ENCODE measurements at regions of chr10 and their contacts with region 1.

Region 1: DNA sequence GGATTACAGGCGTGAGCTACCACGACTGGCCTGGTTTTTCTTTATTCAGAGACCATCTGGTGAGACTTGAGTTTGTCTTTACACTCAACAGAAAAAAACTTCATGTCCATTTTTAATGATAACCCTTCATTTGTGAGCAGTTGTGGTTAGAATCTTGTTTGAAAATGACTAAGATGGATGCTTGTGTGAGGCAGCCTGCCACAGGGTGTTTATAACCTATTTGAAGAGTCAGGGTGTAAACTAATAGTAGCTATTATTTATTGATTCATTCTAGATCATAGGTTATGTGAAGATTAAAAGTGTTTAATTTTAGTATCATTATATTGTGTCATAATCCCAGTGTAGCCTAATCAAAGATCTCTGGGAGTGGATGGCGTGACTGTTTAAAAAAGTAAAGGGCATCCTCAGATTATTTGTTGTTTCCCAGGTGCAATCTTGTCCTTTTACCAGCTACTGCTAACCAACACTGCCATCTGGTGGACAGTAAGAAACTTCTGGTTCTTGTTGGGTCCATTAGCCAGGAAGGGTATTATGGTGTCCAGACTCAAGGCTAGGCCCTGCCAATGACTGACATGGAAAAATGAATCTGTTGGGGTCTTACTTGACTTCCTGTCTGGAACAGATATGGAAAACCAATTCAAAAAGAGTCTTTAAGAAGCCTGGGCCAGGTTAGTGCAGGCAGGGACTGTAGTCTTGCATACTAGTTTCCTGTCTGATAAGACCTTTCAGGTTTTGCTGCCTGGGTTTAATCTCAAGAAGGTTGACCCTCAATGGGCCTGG is 24.9 kb downstream of the NRBF2 start:
- DNase-seq: peak; percentile 61
- ATAC-seq: peak; percentile 61
- H3K4me3 Mint-ChIP-seq: no peak overlapping the region
- H3K27ac Mint-ChIP-seq: no peak overlapping the region
- H3K4me1 Mint-ChIP-seq: peaks cover 6% of the 10 kb centered on the region
- H3K27me3 Mint-ChIP-seq: no peaks in the 10 kb centered on the region

Region 2: DNA sequence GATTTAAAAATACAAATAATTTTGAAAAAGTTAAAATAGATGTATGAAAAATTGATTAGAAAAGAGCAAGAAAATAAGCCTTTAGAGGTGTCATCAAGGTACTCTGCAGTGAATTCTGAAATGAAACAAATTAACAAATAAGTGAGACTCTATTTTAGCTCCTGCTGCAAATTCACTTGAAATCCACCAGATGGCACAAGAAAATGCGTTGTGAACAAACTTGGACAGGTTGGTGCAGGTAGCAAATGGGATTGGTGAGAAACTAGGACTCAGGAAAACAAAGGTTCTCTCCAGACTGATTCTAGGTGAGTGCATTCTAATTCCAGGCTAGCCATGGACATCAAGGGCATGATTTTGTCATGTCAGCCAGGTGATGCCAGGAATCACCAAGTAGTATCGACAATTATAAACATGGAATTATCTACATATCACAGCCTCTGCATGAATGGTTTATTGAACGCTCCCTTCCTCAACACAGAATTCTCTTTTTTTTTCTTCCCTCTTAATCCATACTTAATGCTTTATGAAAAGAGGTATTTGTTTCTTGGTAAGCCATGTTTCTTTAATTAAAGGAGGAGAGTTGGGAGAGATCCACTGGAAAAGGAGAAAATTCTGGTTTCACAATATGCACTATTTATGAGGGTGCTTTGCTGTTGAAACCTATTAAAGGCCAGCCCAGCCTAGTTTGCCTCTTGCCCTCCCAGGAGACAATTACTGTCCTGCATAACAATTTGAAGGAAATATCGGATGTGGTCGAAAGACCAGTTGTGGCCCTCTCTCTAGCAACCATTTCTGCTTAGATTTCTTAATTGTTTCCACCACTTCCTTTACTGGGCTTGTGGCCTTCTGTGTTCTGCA is 665.8 kb before region 1 on chr10:
- CTCF ChIA-PET with region 1: interaction called, 6 read pairs
- POLR2A ChIA-PET with region 1: no interaction called
- intact Hi-C with region 1: loop called (anchors 5 to 10 kb)
- DNase-seq: no peak
- ATAC-seq: no peak
- H3K4me3 Mint-ChIP-seq: no peak overlapping the region
- H3K27ac Mint-ChIP-seq: no peak overlapping the region
- H3K4me1 Mint-ChIP-seq: no peaks in the 10 kb centered on the region
- H3K27me3 Mint-ChIP-seq: peaks cover 3% of the 10 kb centered on the region

Region 3: GRCh38 chr10:62594093-62594520 is 563.9 kb before region 1 on chr10:
- CTCF ChIA-PET with region 1: interaction called, 12 read pairs
- POLR2A ChIA-PET with region 1: interaction called, 3 read pairs
- intact Hi-C with region 1: loop called (anchors 1 kb)
- DNase-seq: peak; percentile 71
- ATAC-seq: peak; percentile 84
- H3K4me3 Mint-ChIP-seq: no peak overlapping the region
- H3K27ac Mint-ChIP-seq: no peak overlapping the region
- H3K4me1 Mint-ChIP-seq: peaks cover 4% of the 10 kb centered on the region
- H3K27me3 Mint-ChIP-seq: peaks cover 14% of the 10 kb centered on the region

Region 4: DNA sequence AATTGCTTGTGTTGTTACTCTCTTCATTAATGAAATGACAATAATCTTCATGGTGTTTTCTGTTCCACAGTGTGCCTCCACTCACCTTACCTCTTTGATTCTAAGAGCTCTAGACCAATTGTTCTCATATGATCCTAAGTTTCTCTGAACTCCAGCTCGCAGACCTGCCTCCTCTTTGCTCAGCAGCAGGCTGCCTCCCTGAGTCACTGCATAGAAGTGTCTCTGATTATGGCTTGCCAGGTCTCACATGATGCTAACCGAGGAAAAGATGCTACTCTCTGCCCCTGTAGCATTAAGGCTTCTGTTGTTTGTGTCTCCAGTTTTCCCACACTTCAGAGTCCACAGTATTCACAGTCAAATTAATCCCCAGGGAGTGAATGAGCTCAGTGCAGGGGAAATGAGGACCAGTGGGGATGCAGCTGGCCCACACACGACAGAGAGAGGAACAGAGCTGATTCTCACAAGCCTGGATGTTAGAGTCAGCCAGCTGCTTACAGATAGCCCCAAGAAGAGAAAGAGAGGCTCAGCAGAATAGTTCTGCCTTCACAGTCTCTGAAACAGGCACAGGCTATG is 196.0 kb before region 1 on chr10:
- CTCF ChIA-PET with region 1: no interaction called
- POLR2A ChIA-PET with region 1: no interaction called
- intact Hi-C with region 1: no loop called
- DNase-seq: no peak
- ATAC-seq: no peak
- H3K4me3 Mint-ChIP-seq: no peak overlapping the region
- H3K27ac Mint-ChIP-seq: no peak overlapping the region
- H3K4me1 Mint-ChIP-seq: no peaks in the 10 kb centered on the region
- H3K27me3 Mint-ChIP-seq: peaks cover 22% of the 10 kb centered on the region

Region 5: DNA sequence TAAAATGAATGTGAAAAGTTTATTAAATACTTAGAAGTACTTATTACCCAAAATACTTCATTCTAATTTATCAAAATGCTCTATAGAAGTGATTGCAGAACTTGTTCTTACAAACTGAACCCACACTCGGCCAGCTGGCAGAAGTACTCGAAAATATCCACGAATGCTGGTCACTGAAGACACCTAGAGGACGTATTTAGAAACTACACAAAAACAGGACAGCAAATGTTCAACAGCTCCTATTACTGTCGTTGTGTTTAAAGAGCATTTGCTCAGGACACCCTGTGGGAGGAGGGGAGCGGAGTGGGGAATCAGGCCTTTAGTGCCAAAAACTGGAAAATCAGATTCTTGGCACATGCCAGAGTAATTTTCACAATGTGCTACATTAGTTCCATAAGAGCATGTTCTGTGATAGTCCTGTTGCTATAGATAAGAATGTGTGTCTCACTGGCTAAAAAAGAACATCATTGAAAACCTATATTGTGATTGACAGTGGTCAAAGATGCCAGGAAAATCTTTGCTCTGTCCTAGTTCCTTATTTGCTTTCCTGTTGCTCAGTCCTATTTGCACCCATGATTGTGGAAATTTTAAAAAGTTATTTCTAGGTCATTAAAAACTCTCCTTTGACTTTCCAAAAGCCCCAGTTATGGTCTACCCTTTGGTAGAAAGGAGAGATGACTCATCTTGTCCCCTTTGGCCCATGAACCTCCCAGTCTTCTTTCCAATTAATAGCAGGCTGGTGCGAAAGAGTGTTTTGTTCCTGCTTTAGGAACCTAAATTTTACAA is 73.9 kb before region 1 on chr10:
- CTCF ChIA-PET with region 1: interaction called, 6 read pairs
- POLR2A ChIA-PET with region 1: no interaction called
- intact Hi-C with region 1: loop called (anchors 1 kb)
- DNase-seq: peak; percentile 62
- ATAC-seq: peak; percentile 78
- H3K4me3 Mint-ChIP-seq: no peak overlapping the region
- H3K27ac Mint-ChIP-seq: no peak overlapping the region
- H3K4me1 Mint-ChIP-seq: no peaks in the 10 kb centered on the region
- H3K27me3 Mint-ChIP-seq: peaks cover 17% of the 10 kb centered on the region

Region 6: DNA sequence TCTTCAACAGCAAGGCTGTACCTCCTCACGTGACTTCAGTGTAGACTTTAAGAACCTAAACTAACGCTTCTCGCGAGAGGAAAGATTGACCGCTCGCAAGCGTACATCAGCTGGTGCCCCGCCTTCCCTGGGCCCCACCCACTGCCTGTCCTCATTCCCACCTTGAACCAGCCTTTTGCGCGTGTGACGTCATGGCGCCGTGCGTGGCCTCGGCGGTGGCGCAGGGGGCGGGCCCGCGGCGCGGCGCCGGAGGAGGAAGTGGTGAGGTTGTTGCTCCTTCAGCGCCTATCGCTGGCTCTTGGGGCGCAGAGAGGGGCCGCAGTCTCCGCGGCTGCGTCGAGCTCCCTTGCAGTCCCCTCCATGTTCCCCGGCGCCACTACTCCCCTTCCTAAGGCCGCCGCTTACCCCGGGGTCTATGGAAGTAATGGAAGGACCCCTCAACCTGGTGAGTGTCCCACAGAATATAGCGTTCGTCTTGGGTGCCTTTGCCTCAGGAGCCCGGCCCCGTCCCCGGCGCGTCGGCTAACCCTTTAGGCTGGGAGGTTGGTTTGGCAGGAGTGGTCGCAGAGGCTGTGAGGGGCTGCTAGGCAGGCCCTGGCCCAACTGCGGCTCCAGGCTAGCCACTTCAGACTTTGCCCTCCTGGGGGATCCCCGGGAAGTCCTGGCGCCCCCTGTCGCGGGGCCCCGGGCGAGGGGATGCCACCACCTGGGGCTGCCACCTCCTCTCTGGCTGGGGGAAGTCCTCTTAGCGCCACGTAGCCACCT is 24.8 kb before region 1 on chr10 and contains the start of gene NRBF2:
- CTCF ChIA-PET with region 1: interaction called, 47 read pairs
- POLR2A ChIA-PET with region 1: interaction called, 6 read pairs
- intact Hi-C with region 1: no loop called
- DNase-seq: peak; percentile 99
- ATAC-seq: peak; percentile 90
- H3K4me3 Mint-ChIP-seq: peak within 1 kb of the TSS; percentile 81
- H3K27ac Mint-ChIP-seq: peak within 1 kb of the TSS; percentile 92
- H3K4me1 Mint-ChIP-seq: peaks cover 46% of the 10 kb centered on the region
- H3K27me3 Mint-ChIP-seq: no peaks in the 10 kb centered on the region
- total RNA-seq, gene NRBF2: 23.9 to 24.1 TPM